PC-3 (cell line): ENCODE measurements at regions of chr2 and their contacts with region 1.

Region 1: DNA sequence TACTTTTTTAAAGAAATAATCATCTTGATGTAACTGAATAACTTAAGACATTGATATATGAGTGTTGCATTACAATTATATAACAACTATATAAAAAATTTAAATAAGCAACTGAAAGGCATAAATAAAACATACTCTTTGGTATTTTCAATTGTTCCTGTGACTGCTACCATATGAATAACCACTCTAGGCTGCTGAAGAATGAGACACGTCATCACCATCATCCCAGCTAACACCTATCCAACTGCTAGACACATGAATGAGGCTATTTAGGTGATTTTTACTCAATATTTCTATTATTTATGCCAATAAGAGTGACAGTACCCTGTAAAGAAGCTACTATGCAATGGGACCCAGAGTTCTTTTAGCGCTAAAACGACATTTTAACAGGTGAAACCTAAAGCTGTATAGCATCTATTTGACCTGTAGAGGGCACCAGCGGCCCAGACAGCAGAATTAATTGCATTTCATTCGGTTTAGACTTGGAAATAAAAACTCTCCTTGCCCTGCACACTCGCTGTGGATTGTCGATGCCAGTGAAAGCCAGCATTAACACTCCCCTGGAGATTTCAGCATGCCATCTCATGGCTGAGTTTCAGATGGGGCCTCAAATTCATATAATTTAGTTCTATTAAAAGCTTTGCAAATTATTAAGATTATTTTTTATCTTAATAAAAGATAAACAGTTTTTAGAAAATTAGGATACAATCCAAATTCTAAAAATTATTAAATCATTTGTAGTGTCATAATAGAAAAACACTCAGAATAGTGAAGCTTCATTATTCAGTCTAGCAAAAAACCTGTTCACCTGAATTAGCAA is 89.4 kb upstream of the MAP2 start:
- DNase-seq: peak; percentile 82
- ATAC-seq: peak; percentile 94
- H3K4me3 ChIP-seq: no peak overlapping the region
- H3K27ac ChIP-seq: no peak overlapping the region
- H3K4me1 ChIP-seq: no peaks in the 10 kb centered on the region
- H3K27me3 ChIP-seq: no peaks in the 10 kb centered on the region
- CTCF ChIP-seq: peak; percentile 93

Region 2: DNA sequence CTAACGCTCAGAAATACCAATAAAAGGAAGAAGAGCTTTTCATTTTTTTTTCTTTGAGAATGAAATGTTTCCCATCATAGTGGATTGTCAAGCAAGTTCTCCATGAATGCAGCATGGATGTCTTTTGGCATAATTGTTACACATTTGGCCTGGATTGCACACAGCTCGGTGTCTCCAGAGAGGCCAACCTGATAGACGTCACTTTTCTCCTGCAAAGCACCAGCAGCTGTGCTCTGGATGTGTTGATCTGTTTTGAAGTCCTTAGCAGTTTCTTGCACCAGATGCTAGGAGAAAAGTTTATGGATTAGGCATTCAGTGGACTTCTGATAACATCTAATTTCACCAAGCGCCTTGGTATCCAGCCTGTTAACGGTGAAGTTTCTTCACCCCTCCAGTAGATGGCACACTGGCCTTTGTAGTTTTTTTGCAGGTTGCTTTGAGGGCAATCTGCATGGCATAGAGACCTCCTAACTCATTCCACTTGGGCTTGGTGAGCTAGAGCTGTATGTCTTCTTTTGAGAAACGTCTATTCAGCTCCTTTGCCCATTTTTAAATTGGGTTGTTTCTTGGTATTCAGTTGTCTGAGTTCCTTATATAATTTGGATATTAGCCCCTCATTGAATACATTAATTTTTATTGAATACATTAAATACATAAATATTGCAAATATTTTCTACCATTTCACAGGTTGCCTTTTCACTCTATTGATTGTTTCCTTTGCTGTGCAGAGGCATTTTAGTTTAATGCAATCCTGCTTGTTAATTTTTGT is 868.1 kb before region 1 on chr2:
- CTCF ChIA-PET with region 1: interaction called, 4 read pairs
- POLR2A ChIA-PET with region 1: no interaction called
- intact Hi-C with region 1: loop called (anchors 1 kb)
- DNase-seq: peak; percentile 68
- ATAC-seq: peak; percentile 57; the same call in 1 of the 2 replicates
- H3K4me3 ChIP-seq: no peak overlapping the region
- H3K27ac ChIP-seq: no peak overlapping the region
- H3K4me1 ChIP-seq: no peaks in the 10 kb centered on the region
- H3K27me3 ChIP-seq: peaks cover 13% of the 10 kb centered on the region; the same call in 1 of the 2 replicates
- CTCF ChIP-seq: peak; percentile 81

Region 3: DNA sequence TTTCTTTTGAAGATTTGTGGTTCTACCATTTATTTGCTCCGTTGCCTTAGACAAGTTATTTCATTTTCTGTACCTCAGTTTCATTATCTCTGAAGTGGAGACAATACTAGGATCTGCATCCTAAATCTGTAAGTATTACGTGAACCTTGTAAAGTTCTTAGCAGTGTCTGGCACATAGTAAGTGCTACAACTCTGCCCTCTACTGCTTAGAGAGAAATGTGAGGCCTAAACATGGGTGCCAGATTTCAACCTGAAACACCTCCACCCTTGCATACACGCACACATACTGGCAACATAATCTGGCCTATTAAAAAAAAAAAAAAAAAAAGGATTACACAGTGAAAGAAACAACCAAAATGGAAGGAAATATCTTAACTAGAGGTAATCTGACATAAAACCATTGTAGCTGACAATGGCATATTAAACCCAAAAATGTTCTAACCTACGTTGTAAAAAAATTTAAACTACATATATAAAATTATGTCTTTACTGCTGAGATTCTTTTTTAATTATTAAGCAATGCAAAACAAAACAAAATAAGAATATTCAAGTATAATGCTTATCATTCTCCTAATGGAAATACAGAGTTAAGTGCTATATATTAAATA is 222.1 kb after region 1 on chr2:
- CTCF ChIA-PET with region 1: no interaction called
- POLR2A ChIA-PET with region 1: no interaction called
- intact Hi-C with region 1: loop called (anchors 1 kb)
- DNase-seq: peak; percentile 73
- ATAC-seq: peak; percentile 94
- H3K4me3 ChIP-seq: no peak overlapping the region
- H3K27ac ChIP-seq: no peak overlapping the region
- H3K4me1 ChIP-seq: no peaks in the 10 kb centered on the region
- H3K27me3 ChIP-seq: no peaks in the 10 kb centered on the region
- CTCF ChIP-seq: peak; percentile 80

Region 4: DNA sequence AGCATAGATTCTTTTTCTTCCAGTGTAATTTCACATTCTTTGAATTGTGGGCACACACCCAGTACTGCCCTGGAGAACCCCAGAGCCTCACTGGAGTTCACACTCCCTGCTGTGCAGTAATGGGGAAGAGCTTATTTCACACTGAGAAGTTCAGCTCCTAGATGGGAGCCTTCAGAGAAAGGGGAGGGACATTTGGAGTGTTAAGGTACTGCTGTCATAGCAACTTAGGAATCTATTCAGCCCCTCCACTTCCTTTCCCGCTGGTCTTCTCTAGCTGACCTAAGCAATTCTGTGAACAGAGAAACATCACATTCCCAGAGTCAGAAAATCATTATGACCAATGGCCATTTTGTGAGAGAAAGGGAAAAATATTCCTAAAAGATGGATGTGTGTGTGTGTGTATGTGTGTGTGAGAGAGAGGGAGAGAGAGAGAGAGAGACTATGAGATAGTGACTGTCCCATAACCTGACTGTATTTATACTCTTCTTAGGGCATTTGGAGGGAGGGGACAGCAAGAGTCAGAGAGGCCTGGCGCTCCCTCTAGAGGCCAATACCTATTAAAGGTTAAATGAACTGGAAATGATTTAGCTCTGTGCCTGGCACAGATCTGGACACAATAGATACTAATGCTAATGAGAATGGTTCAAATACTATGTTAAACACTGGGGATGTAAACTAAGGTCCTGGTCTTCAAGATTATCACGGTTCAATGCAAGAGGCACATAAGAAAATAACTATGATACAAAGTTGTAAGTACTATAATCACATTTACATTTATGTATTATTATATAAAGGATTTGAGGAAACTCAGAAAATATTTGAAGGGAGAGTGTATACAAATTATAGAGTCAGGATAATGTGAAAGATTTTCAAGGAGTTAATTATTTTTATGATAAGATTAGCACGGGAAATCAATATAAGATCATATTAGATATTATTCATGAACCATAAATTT is 626.5 kb after region 1 on chr2:
- CTCF ChIA-PET with region 1: no interaction called
- POLR2A ChIA-PET with region 1: no interaction called
- intact Hi-C with region 1: loop called (anchors 5 kb)
- DNase-seq: peak; percentile 68
- ATAC-seq: peak; percentile 77
- H3K4me3 ChIP-seq: no peak overlapping the region
- H3K27ac ChIP-seq: no peak overlapping the region
- H3K4me1 ChIP-seq: no peaks in the 10 kb centered on the region
- H3K27me3 ChIP-seq: peaks cover 46% of the 10 kb centered on the region
- CTCF ChIP-seq: peak; percentile 87